ENCODE measurements at regions of chr6 and their contacts with region 1.

Region 1: GRCh38 chr6:156686995-156687788 is 90.0 kb upstream of the ARID1B start:
- DNase-seq: peak; percentile 40
- ATAC-seq: peak; percentile 91
- H3K4me3 ChIP-seq: peak overlapping the region; percentile 81 to 93 (median 86)
- H3K27ac ChIP-seq: peak overlapping the region; percentile 81
- H3K4me1 ChIP-seq: peaks cover 18% of the 10 kb centered on the region
- H3K27me3 ChIP-seq: peaks cover 0 to 33% of the 10 kb centered on the region in 2 experiments; a peak in 3 of 5 replicates
- CTCF ChIP-seq: 0 out of 2 replicates have a peak, but pooled peaks have one; percentile 3
- EP300 ChIP-seq: no peak
- POLR2A ChIP-seq: peak; percentile 64 to 84
- RAD21 ChIP-seq: peak; percentile 5

Region 2: GRCh38 chr6:155100087-155100486 is 1587.1 kb before region 1 on chr6:
- CTCF ChIA-PET with region 1: no interaction called
- POLR2A ChIA-PET with region 1: no interaction called
- in situ Hi-C with region 1: no loop called
- intact Hi-C with region 1: loop called (anchors 5 kb)
- DNase-seq: no peak
- ATAC-seq: peak; percentile 54
- H3K4me3 ChIP-seq: no peak overlapping the region
- H3K27ac ChIP-seq: no peak overlapping the region
- H3K4me1 ChIP-seq: no peaks in the 10 kb centered on the region
- H3K27me3 ChIP-seq: no peaks in the 10 kb centered on the region
- CTCF ChIP-seq: no peak
- EP300 ChIP-seq: no peak
- POLR2A ChIP-seq: no peak
- RAD21 ChIP-seq: no peak

Region 3: GRCh38 chr6:156719720-156720563 is 32.8 kb after region 1 on chr6:
- CTCF ChIA-PET with region 1: no interaction called
- POLR2A ChIA-PET with region 1: interaction called, 3 read pairs
- in situ Hi-C with region 1: no loop called
- intact Hi-C with region 1: loop called (anchors 2 kb)
- DNase-seq: peak; percentile 91
- ATAC-seq: peak; percentile 95
- H3K4me3 ChIP-seq: peak overlapping the region; percentile 54 to 75 (median 59)
- H3K27ac ChIP-seq: peak overlapping the region; percentile 23
- H3K4me1 ChIP-seq: peaks cover 32% of the 10 kb centered on the region
- H3K27me3 ChIP-seq: peaks cover 0 to 4% of the 10 kb centered on the region in 2 experiments; a peak in 4 of 5 replicates
- CTCF ChIP-seq: no peak; the same call in 1 of the 2 replicates
- EP300 ChIP-seq: peak in 1 of 2 experiments; percentile 70; a peak in 3 of 4 replicates
- POLR2A ChIP-seq: peak; percentile 44 to 51; a peak in 1 of 4 replicates
- RAD21 ChIP-seq: peak; percentile 61

Region 4: GRCh38 chr6:156794546-156795354 is 107.6 kb after region 1 on chr6:
- CTCF ChIA-PET with region 1: no interaction called
- POLR2A ChIA-PET with region 1: no interaction called
- in situ Hi-C with region 1: no loop called
- intact Hi-C with region 1: no loop called
- DNase-seq: no peak
- ATAC-seq: no peak
- H3K4me3 ChIP-seq: no peak overlapping the region
- H3K27ac ChIP-seq: no peak overlapping the region
- H3K4me1 ChIP-seq: peaks cover 33% of the 10 kb centered on the region
- H3K27me3 ChIP-seq: no peaks in the 10 kb centered on the region
- CTCF ChIP-seq: no peak
- EP300 ChIP-seq: no peak
- POLR2A ChIP-seq: no peak
- RAD21 ChIP-seq: no peak